PC-9 (cell line): ENCODE measurements at regions of chr14 and their contacts with region 1.

Region 1: DNA sequence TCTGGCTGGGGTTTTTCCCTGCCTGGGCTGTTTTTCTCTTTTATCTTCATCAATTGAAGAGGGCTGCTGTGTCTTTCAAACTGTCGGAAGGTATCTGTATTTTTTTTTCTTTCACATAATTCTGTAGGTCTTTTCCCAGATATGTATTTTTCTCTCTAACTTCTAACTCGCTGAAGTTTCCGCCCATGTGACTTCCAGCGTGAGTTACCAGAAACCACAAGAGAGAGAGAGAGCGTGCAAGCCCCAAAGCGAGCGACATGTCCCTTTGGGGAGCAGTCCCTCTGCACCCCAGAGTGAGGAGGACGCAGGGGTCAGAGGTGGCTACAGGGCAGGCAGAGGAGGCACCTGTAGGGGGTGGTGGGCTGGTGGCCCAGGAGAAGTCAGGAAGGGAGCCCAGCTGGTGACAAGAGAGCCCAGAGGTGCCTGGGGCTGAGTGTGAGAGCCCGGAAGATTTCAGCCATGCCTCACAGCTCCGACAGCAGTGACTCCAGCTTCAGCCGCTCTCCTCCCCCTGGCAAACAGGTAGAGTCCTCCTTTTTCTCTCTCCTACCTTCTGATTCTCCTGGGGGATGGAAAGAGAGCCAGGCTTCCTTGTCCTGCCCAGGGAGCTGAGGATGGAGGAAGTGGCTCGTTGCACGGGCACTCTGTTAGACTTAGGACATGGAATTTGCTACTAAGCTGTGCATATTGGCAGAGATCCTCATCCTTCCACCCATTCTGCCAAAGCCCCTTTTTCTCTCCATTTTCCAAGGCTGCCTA is at the start of gene BATF:
- DNase-seq: peak; percentile 69 to 74
- H3K4me3 ChIP-seq: peak within 1 kb of the TSS; percentile 68
- H3K27ac ChIP-seq: peak within 1 kb of the TSS; percentile 93
- H3K4me1 ChIP-seq: peaks cover 60% of the 10 kb centered on the region
- H3K27me3 ChIP-seq: no peaks in the 10 kb centered on the region
- CTCF ChIP-seq: no peak
- total RNA-seq, gene BATF: 55.7 and 79.0 TPM in 2 replicates

Region 2: DNA sequence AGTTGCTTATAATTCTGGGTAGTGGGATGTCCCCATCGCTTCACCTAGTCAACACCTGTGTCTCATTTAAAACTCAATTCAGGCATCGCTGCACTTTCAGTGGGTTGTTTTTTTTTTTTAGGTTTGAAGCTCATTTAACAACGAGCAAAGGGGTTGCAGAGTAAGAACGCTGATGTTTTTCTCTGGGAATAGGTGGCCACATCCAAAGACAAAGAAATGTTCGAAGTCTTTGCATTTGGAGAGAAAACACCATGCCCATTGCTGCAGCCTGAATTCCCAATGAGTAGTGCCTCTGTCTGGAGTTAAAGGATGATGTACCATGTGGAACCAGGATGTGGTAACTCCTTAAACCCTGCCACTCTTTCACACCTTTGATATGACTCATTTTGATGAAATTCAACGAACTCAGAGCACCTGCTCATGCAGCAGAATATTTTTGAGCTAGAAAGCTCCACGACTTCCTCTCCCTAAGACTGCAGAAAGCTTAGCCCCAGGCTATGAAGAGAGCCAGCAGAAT is 35.2 kb before region 1 on chr14:
- CTCF ChIA-PET with region 1: interaction called, 6 read pairs
- POLR2A ChIA-PET with region 1: interaction called, 3 read pairs
- intact Hi-C with region 1: loop called (anchors 1 kb)
- DNase-seq: peak; percentile 83 to 99
- H3K4me3 ChIP-seq: no peak overlapping the region
- H3K27ac ChIP-seq: 0 out of 2 replicates have a peak overlapping the region, but pooled peaks have one; percentile 5
- H3K4me1 ChIP-seq: peaks cover 18% of the 10 kb centered on the region
- H3K27me3 ChIP-seq: no peaks in the 10 kb centered on the region
- CTCF ChIP-seq: no peak

Region 3: GRCh38 chr14:75497191-75497590 is 25.2 kb before region 1 on chr14:
- CTCF ChIA-PET with region 1: interaction called, 5 read pairs
- POLR2A ChIA-PET with region 1: interaction called, 11 read pairs
- intact Hi-C with region 1: loop called (anchors 1 kb)
- DNase-seq: no peak
- H3K4me3 ChIP-seq: no peak overlapping the region
- H3K27ac ChIP-seq: no peak overlapping the region
- H3K4me1 ChIP-seq: peaks cover 4% of the 10 kb centered on the region; the same call in 1 of the 2 replicates
- H3K27me3 ChIP-seq: no peaks in the 10 kb centered on the region
- CTCF ChIP-seq: no peak

Region 4: GRCh38 chr14:75542588-75543091 is 20.2 kb after region 1 on chr14:
- CTCF ChIA-PET with region 1: interaction called, 6 read pairs
- POLR2A ChIA-PET with region 1: interaction called, 9 read pairs
- intact Hi-C with region 1: loop called (anchors 1 kb)
- DNase-seq: peak; percentile 75 to 93
- H3K4me3 ChIP-seq: no peak overlapping the region
- H3K27ac ChIP-seq: peak overlapping the region; percentile 34; the same call in 1 of the 2 replicates
- H3K4me1 ChIP-seq: peaks cover 16% of the 10 kb centered on the region
- H3K27me3 ChIP-seq: no peaks in the 10 kb centered on the region
- CTCF ChIP-seq: no peak

Region 5: DNA sequence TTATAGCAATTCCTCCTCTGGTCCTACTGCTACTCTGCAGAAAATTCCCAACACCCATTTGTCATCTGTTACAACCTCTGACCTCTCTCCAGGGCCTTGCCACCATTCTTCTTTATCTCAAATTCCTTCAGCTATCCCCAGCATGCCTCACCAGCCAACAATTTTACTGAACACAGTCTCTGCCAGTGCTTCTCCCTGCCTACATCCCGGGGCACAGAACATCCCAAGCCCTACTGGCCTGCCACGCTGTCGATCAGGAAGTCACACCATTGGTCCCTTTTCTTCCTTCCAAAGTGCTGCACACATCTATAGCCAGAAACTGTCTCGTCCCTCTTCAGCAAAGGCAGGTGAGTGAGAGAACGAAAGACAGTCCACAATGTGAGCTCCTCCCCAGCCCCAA is 260.8 kb after region 1 on chr14:
- CTCF ChIA-PET with region 1: no interaction called
- POLR2A ChIA-PET with region 1: no interaction called
- intact Hi-C with region 1: no loop called
- DNase-seq: no peak
- H3K4me3 ChIP-seq: no peak overlapping the region
- H3K27ac ChIP-seq: no peak overlapping the region
- H3K4me1 ChIP-seq: no peaks in the 10 kb centered on the region
- H3K27me3 ChIP-seq: no peaks in the 10 kb centered on the region
- CTCF ChIP-seq: no peak